ENCODE measurements at regions of chr7 and their contacts with region 1.

Region 1: DNA sequence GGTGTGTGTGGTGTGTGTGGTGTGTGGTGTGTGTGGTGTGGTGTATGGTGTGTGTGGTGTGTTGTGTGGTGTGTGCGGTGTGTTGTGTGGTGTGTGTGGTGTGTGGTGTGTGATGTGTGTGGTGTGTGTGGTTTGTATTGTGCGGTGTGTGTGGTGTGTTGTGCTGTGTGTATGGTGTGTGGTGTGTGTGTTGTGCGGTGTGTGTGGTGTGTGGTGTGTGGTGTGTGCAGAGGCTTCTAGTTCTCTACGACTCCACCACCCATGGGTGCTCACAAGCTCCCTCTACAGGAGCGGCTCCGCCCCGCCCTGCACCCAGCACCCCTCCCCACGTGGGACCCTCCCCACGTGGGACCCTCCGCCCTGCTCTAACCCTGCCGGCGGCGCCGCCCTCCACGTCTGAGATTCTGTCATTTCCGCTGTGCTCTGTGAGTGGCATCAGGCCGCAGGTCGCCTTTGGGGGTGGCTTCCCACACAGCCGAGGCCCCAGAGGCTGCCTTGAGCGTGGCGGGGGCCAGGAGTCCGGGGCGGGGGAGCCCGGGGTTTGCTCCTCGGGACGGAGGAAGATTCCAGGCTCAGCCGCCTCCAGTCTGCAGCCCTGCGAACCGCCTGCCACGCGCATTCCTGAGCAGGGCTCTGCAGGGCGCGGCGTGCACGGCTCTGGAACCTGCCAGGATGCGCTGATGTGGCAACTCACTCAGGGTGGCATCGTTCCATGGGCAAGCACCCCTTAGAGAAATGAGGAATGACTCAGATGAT is 37.0 kb upstream of the DNAJB6 start:
- DNase-seq: no peak
- H3K4me3 Mint-ChIP-seq: no peak overlapping the region
- H3K27ac Mint-ChIP-seq: peak overlapping the region; percentile 38
- H3K4me1 Mint-ChIP-seq: peaks cover 32% of the 10 kb centered on the region
- H3K27me3 Mint-ChIP-seq: no peaks in the 10 kb centered on the region

Region 2: DNA sequence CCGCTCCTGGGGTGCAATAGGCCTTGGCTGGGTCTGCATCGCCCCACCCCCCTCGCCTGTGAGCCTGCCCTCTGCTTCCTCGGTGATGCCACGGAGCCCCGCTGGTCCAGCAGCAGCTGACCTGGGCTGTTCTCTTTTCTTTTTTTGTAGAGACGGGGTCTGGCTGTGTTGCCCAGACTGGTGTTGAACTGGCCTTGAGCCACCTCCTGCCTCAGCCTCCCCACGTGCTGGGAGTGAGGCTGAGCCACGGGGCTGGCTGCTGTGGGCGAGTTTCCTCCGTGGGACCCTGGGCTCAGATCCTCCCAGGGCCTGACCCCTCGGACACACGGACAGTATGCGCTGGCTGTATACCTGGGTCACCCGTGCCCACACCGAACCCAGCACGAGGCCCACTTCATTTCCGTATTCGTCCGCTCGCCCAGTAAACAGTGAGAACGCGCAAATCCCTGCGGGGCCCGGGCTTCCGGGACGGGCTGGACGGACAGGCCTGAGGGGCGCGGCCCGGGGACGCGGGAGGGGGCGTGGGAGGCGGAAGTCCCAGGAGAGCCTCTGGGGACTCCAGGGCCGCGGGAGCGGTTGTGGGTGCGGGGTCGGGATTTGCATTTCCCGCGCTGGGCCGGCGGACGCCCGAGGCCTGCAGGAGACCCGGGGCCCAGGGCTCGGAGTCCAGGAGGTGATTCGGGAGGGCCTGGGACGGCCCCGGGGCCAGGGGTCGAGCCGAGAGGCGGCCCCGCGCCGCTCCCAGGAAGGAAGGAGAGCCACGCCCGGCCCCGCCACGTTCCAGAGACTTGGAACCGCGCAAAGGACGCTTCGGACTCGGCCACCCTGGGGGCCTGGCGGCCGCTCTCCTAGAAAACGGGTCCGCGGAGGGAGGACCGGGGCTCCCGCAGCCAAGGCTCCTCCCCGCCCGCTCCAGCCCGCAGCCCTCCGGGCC is 20.7 kb before region 1 on chr7:
- intact Hi-C with region 1: loop called (anchors 2 kb)
- DNase-seq: no peak
- H3K4me3 Mint-ChIP-seq: no peak overlapping the region
- H3K27ac Mint-ChIP-seq: no peak overlapping the region
- H3K4me1 Mint-ChIP-seq: peaks cover 13% of the 10 kb centered on the region
- H3K27me3 Mint-ChIP-seq: peaks cover 2% of the 10 kb centered on the region

Measured in activated T-helper 2 cell treated with anti-CD3 and anti-CD28 coated beads, Interferon-gamma antibody, Interleukin-2, Interleukin-4, amounts not matched to agents 10 μg/mL and 5 μg/mL and 100 μg/mL, durations not matched to agents 14 hours and 24 hours and 36 hours (primary cell).